ENCODE measurements at regions of chr2 and their contacts with region 1.

Region 1: DNA sequence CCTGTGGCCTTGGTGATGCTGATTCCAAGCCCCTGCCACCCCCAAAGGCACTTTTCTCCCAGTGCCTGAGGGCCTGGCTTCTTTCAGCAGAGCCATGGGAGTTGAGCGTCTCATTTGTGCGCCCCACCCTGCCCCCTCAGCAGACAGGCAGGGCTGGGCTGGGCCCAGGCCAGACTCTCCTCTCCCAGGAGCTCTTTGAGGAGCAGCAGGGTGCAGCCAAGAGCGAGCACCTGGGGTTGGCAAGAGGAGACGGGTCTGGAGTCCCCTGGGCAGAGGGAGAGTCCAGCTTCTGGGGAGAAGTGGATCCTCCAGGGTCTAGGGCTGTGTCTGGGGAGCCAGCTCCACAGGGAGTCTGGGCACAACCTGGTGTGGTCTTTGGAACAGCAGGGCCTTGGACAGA is 21.2 kb downstream of the NPPC start:
- DNase-seq: no peak
- H3K4me3 ChIP-seq: no peak overlapping the region
- H3K27ac ChIP-seq: no peak overlapping the region
- H3K4me1 ChIP-seq: no peaks in the 10 kb centered on the region
- H3K27me3 ChIP-seq: no peaks in the 10 kb centered on the region
- CTCF ChIP-seq: no peak

Region 2: DNA sequence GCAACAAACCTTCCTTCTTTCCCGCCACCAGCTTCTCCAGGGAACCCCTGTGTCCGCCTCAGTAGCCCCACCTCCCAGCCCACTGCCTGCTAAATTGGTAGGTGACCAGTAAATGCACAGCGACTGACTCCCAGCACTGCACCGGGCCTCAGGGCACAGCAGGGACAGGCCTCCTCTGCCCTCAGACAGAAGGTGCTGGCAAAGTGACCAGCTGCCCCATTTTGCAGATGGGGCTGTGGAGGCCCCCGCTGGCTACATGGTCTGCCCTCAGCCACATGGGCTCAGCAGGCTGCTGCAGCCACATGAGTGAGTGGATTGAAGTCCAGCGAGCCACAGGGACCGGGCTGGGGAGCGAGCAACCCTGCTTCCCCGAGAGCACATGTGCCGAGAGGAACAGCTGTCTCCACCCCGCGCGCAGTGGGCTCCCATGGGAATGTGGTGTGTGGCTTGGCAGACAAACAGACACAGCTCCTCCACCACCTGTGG is 28.9 kb after region 1 on chr2:
- intact Hi-C with region 1: no loop called
- DNase-seq: no peak
- H3K4me3 ChIP-seq: no peak overlapping the region
- H3K27ac ChIP-seq: no peak overlapping the region
- H3K4me1 ChIP-seq: no peaks in the 10 kb centered on the region
- H3K27me3 ChIP-seq: no peaks in the 10 kb centered on the region
- CTCF ChIP-seq: no peak

Region 3: GRCh38 chr2:232327105-232328041 is 422.3 kb after region 1 on chr2:
- intact Hi-C with region 1: loop called (anchors 2 kb)
- DNase-seq: peak; percentile 84
- H3K4me3 ChIP-seq: no peak overlapping the region
- H3K27ac ChIP-seq: no peak overlapping the region
- H3K4me1 ChIP-seq: no peaks in the 10 kb centered on the region
- H3K27me3 ChIP-seq: no peaks in the 10 kb centered on the region
- CTCF ChIP-seq: peak; percentile 82

Measured in colonic mucosa (tissue), 4 donors.